ENCODE measurements at regions of chr1 and their contacts with region 1.

Region 1: GRCh38 chr1:172826096-172826743 is 167.3 kb downstream of the FASLG start:
- DNase-seq: peak; percentile 76
- H3K4me3 ChIP-seq: 0 out of 2 replicates have a peak overlapping the region, but pooled peaks have one; percentile 9
- H3K27me3 ChIP-seq: no peaks in the 10 kb centered on the region
- CTCF ChIP-seq: peak; percentile 58

Region 2: DNA sequence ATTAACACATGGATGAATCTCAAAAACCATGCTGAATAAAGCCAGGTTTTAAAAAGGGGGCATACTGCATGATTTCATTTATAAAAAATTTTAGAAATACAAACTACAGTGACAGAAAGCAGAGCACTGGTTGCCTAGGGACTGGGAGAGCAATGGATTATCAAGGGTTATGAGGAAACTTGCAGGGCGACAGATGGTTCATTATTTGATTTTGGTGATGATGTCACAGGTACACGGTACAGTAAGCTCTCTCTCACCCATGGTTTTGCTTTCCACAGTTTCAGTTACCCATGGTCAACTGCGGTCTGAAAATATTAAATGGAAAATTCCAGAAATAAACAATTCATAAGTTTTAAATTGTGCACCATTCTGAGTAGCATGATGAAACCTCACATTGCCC is 1098.4 kb before region 1 on chr1:
- CTCF ChIA-PET with region 1: no interaction called
- POLR2A ChIA-PET with region 1: interaction called, 11 read pairs
- DNase-seq: no peak
- H3K4me3 ChIP-seq: no peak overlapping the region
- H3K27me3 ChIP-seq: no peaks in the 10 kb centered on the region
- CTCF ChIP-seq: no peak

Region 3: DNA sequence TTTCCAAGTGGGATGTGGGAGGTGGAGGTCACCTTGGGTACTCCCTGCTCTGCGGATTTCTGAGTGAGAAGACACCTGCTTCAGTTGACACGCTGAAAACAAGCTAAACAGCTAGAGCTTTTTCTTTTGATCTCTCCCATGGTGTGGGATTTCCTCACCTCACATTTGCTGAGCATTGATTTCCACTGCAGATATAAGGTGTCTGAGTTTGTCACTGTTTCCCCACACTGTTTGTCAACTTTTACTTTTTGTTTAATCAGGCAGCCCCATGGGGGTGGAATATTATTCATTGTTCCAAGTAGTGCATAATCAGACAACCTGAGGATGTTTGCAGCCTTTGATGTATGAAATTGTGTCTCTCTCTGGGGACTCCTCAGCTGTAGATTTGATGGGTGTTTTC is 117.8 kb before region 1 on chr1:
- CTCF ChIA-PET with region 1: no interaction called
- POLR2A ChIA-PET with region 1: no interaction called
- DNase-seq: no peak
- H3K4me3 ChIP-seq: no peak overlapping the region
- H3K27me3 ChIP-seq: no peaks in the 10 kb centered on the region
- CTCF ChIP-seq: no peak

Region 4: GRCh38 chr1:172745014-172745413 is 81.2 kb before region 1 on chr1:
- CTCF ChIA-PET with region 1: interaction called, 59 read pairs
- POLR2A ChIA-PET with region 1: interaction called, 3 read pairs
- DNase-seq: peak; percentile 33
- H3K4me3 ChIP-seq: no peak overlapping the region
- H3K27me3 ChIP-seq: peaks cover 2% of the 10 kb centered on the region; the same call in 1 of the 2 replicates
- CTCF ChIP-seq: peak; percentile 67

Region 5: DNA sequence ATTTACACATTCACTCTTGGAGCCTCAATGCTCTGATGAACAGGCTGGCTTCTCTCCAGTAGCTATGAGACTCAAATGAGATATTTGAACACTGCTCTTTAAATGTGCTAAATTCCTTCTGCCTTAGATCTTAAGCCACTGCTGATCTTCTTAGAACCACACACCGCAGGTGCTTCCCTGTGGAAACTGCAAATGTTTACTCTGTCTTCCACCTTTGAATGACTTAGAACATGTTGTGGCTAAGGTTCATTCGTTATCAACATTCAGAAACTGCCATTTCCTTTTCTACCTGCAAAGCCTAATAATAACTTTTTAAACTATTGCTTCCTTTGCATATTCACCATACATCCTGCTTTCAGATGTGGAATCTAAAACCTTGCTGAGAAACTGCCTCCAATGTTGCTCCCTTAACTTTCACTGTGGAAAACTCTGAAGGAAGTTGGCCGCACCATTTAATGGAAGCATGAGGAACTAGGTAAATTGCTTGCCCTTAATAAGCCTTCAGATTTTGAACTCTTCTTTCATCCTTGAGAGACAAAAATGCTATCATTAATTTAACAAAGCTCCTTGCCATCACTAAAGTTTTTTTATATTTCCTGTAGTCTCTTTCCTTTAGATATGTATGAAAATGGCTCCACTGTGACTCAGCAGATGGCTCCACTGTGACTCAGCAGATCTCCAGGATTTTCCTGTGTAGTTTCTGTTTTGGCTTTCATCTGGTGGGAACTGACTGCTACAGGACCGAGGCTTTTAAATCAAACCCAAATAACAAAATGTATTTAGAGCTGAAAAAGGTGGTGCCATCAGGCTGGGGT is 80.8 kb after region 1 on chr1:
- CTCF ChIA-PET with region 1: interaction called, 13 read pairs
- POLR2A ChIA-PET with region 1: interaction called, 7 read pairs
- DNase-seq: peak; percentile 68
- H3K4me3 ChIP-seq: no peak overlapping the region
- H3K27me3 ChIP-seq: no peaks in the 10 kb centered on the region
- CTCF ChIP-seq: no peak

Region 6: DNA sequence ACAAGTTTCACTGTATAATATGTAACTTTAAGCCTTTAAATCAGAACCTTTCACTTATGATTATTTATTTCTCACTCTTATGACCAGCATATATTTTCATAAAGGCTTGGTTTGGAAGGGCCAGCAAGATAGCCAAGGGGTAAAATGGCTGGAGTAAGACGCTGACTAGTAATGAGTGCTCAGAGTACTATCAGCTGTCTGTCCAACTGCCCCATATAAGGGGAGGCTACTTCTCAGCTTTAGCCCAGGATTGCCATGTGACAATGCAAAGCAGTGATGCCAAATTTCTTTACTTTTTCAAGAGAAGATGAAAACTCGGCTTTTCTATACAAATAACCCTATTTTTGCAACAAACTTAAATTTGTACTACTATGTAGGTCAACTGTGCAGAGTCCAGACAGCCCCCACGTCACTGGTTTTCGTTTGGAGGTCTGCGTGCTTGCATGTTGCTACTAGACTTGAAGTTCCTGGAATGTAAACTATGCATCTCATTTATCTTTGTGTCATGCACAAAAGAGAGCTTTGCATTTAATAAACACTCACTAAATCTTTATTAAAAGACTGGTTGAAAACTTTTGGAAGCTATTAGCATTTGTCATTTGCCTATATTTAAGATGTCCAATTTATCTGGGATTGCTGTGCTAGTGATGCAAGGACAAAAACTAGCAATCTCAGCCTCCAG is 114.1 kb after region 1 on chr1:
- CTCF ChIA-PET with region 1: interaction called, 3 read pairs
- POLR2A ChIA-PET with region 1: interaction called, 12 read pairs
- DNase-seq: no peak
- H3K4me3 ChIP-seq: no peak overlapping the region
- H3K27me3 ChIP-seq: no peaks in the 10 kb centered on the region
- CTCF ChIP-seq: no peak

Region 7: GRCh38 chr1:173202430-173203145 is 376.4 kb after region 1 on chr1:
- CTCF ChIA-PET with region 1: interaction called, 62 read pairs
- POLR2A ChIA-PET with region 1: interaction called, 3 read pairs
- DNase-seq: peak; percentile 77
- H3K4me3 ChIP-seq: no peak overlapping the region
- H3K27me3 ChIP-seq: no peaks in the 10 kb centered on the region
- CTCF ChIP-seq: peak; percentile 67